GM12878 (cell line): ENCODE measurements at regions of chr22 and their contacts with region 1.

Region 1: GRCh38 chr22:50306753-50307749 is at the start of gene PLXNB2:
- DNase-seq: no peak
- ATAC-seq: peak; percentile 37
- H3K4me3 ChIP-seq: peak within 1 kb of the TSS; percentile 91
- H3K27ac ChIP-seq: peak within 1 kb of the TSS; percentile 78
- H3K4me1 ChIP-seq: peaks cover 51% of the 10 kb centered on the region
- H3K27me3 ChIP-seq: no peaks in the 10 kb centered on the region
- CTCF ChIP-seq: no peak
- EP300 ChIP-seq: no peak
- POLR2A ChIP-seq: peak; percentile 64
- RAD21 ChIP-seq: no peak
- polyA plus RNA-seq, gene PLXNB2: 0.68 to 4.5 TPM

Region 2: GRCh38 chr22:50276143-50276542 is 30.9 kb before region 1 on chr22:
- CTCF ChIA-PET with region 1: interaction called, 19 read pairs
- POLR2A ChIA-PET with region 1: interaction called, 7 read pairs
- RAD21 ChIA-PET with region 1: interaction called, 9 read pairs
- SMC1A ChIA-PET with region 1: no interaction called
- in situ Hi-C with region 1: no loop called
- intact Hi-C with region 1: no loop called
- DNase-seq: peak; percentile 66
- ATAC-seq: peak; percentile 87
- H3K4me3 ChIP-seq: no peak overlapping the region
- H3K27ac ChIP-seq: no peak overlapping the region
- H3K4me1 ChIP-seq: peaks cover 3% of the 10 kb centered on the region
- H3K27me3 ChIP-seq: no peaks in the 10 kb centered on the region
- CTCF ChIP-seq: peak; percentile 62 to 77 (median 73)
- EP300 ChIP-seq: no peak
- POLR2A ChIP-seq: no peak
- RAD21 ChIP-seq: peak; percentile 36; the same call in 1 of the 2 replicates

Region 3: GRCh38 chr22:50293441-50294318 is 13.4 kb before region 1 on chr22:
- CTCF ChIA-PET with region 1: interaction called, 10 read pairs
- POLR2A ChIA-PET with region 1: interaction called, 22 read pairs
- RAD21 ChIA-PET with region 1: interaction called, 10 read pairs
- SMC1A ChIA-PET with region 1: interaction called, 21 read pairs
- in situ Hi-C with region 1: no loop called
- intact Hi-C with region 1: no loop called
- DNase-seq: no peak
- ATAC-seq: peak; percentile 33
- H3K4me3 ChIP-seq: peak overlapping the region; percentile 19; the same call in 1 of the 2 replicates
- H3K27ac ChIP-seq: peak overlapping the region; percentile 70; the same call in 1 of the 2 replicates
- H3K4me1 ChIP-seq: peaks cover 27% of the 10 kb centered on the region
- H3K27me3 ChIP-seq: no peaks in the 10 kb centered on the region
- CTCF ChIP-seq: no peak
- EP300 ChIP-seq: no peak
- POLR2A ChIP-seq: peak; percentile 32; the same call in 1 of the 2 replicates
- RAD21 ChIP-seq: no peak

Region 4: GRCh38 chr22:50326959-50327710 is 20.1 kb after region 1 on chr22 and contains the start of gene DENND6B:
- CTCF ChIA-PET with region 1: interaction called, 14 read pairs
- POLR2A ChIA-PET with region 1: interaction called, 3 read pairs
- RAD21 ChIA-PET with region 1: interaction called, 6 read pairs
- SMC1A ChIA-PET with region 1: interaction called, 4 read pairs
- in situ Hi-C with region 1: no loop called
- intact Hi-C with region 1: no loop called
- DNase-seq: no peak
- ATAC-seq: peak; percentile 97
- H3K4me3 ChIP-seq: peak within 1 kb of the TSS; percentile 69
- H3K27ac ChIP-seq: peak within 1 kb of the TSS; percentile 85
- H3K4me1 ChIP-seq: peaks cover 2% of the 10 kb centered on the region; the same call in 1 of the 2 replicates
- H3K27me3 ChIP-seq: no peaks in the 10 kb centered on the region
- CTCF ChIP-seq: peak in 2 of 3 experiments; percentile 29 to 83; a peak in 2 of 6 replicates
- EP300 ChIP-seq: no peak
- POLR2A ChIP-seq: peak; percentile 84
- RAD21 ChIP-seq: peak; percentile 74
- polyA plus RNA-seq, gene DENND6B: 0.72 to 2.3 TPM

Region 5: DNA sequence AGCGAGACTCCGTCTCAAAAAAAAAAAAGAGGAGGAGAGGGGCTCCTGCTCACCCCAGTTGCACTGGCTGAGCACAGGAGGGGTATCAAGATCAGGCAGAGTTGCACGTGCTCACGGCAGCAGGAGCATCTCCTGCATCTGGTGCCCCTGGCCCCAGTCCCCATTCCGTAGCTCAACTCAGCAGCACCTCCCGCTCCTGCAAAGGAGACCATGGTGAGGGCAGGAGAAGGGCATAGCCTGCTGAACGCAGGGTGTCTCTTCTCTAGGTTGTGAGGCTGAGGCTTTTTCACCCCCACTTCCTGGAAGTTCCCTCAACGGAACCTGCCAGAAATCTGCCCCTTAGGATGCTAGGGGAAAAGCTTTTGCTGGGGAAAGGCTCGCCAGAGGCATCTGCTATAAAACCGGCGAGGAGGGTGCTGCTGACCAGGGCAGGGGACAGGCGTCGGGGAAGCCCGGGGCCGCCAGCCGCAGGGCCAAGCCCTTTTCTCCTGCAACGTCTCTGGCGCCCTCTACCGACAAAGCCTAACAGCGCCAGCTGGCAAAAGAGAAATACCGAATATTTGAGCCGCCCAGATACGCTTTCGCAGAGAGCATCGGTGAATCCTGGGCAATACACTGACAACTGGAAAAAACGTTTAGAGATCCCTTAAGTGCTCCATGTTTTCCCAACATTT is 35.1 kb after region 1 on chr22:
- CTCF ChIA-PET with region 1: interaction called, 17 read pairs
- POLR2A ChIA-PET with region 1: no interaction called
- RAD21 ChIA-PET with region 1: interaction called, 6 read pairs
- SMC1A ChIA-PET with region 1: interaction called, 3 read pairs
- in situ Hi-C with region 1: no loop called
- intact Hi-C with region 1: no loop called
- DNase-seq: no peak
- ATAC-seq: peak; percentile 88
- H3K4me3 ChIP-seq: peak overlapping the region; percentile 80
- H3K27ac ChIP-seq: peak overlapping the region; percentile 51; the same call in 1 of the 2 replicates
- H3K4me1 ChIP-seq: 0 out of 2 replicates have a peak, but pooled peaks cover 3% of the 10 kb centered on the region
- H3K27me3 ChIP-seq: no peaks in the 10 kb centered on the region
- CTCF ChIP-seq: peak; percentile 96 to 99 (median 96); a peak in 5 of 6 replicates
- EP300 ChIP-seq: no peak
- POLR2A ChIP-seq: no peak
- RAD21 ChIP-seq: peak; percentile 93

Region 6: DNA sequence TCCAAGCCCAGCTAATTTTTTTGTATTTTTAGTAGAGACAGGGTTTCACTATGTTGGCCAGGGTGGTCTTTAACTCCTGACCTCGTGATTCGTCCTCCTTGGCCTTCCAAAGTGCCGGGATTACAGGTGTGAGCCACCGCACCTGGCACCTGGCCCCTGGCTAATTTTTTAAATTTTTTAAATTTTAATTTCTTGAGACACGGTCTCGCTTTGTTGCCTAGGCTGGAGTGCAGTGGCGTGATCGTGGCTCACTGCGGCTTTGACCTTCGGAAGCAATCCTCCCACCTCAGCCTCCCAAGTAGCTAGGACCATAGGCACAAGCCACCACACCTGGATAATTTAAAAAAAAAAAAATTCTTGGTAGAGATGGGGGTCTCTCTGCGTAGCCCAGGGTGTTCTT is 50.7 kb after region 1 on chr22:
- CTCF ChIA-PET with region 1: no interaction called
- POLR2A ChIA-PET with region 1: no interaction called
- RAD21 ChIA-PET with region 1: no interaction called
- SMC1A ChIA-PET with region 1: no interaction called
- in situ Hi-C with region 1: no loop called
- intact Hi-C with region 1: no loop called
- DNase-seq: no peak
- ATAC-seq: no peak
- H3K4me3 ChIP-seq: no peak overlapping the region
- H3K27ac ChIP-seq: no peak overlapping the region
- H3K4me1 ChIP-seq: no peaks in the 10 kb centered on the region
- H3K27me3 ChIP-seq: no peaks in the 10 kb centered on the region
- CTCF ChIP-seq: no peak
- EP300 ChIP-seq: no peak
- POLR2A ChIP-seq: no peak
- RAD21 ChIP-seq: no peak